HEK293T (cell line): ENCODE measurements at regions of chr7 and their contacts with region 1.

Region 1: DNA sequence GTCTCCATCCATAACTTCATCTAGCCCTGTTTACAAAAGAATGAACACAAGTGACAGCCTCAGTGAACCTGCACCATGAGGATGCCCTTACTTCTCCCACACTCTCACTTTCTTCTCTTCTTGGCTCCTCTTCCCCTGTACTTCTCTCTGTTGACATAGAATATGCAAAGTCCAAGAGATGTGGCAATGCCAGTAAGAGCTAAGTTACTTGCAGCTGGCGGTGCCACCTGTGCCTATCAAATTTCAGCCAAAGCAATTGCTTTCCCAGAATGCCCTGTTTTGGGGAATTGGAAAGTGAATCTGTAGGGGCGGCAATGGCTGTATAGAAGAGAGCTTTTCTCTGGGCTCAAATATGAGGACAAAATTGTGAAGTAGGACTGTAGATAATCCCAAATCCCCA is 557.8 kb downstream of the AUTS2 start:
- DNase-seq: no peak

Region 2: DNA sequence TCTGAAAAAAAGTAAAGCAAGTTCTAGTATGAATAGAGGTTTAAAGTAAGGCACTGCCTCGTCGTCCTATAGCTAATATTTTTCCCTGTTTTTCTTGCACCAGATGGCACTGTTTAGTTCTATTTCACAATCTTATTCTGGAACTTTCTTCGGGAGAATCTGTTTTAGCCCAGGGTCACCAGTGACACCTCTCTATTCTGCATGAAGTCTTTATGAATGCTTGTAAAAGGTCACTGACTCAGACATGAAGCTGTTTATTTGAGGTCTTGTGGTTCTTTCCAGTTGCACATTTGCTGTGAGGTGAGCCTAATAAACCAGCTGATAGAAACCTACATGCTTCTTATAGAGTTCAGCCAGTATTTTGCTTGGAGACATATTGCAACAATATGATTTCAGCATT is 113.5 kb before region 1 on chr7:
- CTCF ChIA-PET with region 1: interaction called, 11 read pairs
- POLR2A ChIA-PET with region 1: no interaction called
- DNase-seq: no peak

Region 3: DNA sequence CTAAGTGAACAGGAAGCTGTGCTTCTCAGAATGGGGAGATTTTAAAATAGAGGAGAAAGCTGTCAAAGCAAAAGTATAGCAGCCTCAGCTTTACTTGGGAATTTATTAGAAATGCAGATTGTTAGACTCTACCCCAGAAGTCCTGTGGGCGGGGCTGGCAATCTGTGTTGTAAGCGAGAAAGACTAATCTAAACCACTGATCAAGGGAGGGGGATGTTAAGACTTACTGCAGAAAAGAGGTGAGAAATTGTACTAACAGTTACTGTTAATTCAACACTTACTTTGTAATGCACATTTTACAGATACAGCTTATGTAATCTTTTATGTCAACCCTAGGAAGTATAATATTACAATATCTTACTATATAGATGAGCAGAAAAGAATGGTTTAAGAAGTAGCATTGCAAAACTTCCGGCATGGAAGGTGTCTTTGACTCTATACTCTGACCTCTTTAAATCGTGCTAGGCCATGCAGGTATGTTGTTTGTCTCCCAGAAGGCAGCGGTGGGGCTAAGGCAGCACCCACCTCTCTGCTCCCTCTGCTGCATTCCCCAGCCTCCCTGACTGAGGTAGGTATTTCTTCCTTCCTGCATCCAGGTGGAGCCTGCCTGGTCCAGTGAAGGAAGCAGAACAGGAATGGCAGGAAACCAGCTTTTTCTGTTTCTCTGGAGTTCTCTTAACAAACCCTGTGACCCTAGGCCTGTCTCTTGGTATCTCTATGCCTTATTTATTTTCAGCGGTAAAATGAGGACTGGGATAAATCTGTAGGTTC is 95.6 kb before region 1 on chr7:
- CTCF ChIA-PET with region 1: no interaction called
- POLR2A ChIA-PET with region 1: no interaction called
- DNase-seq: no peak